ENCODE measurements at regions of chr15 and their contacts with region 1.

Region 1: GRCh38 chr15:42920519-42921227 is at the start of gene TTBK2:
- DNase-seq: peak; percentile 97 to 98 (median 98)
- H3K4me3 ChIP-seq: peak within 1 kb of the TSS; percentile 81 to 98
- H3K4me3 Mint-ChIP-seq: peak within 1 kb of the TSS; percentile 94 to 99 (median 96)
- H3K27ac ChIP-seq: peak within 1 kb of the TSS; percentile 60
- H3K27ac Mint-ChIP-seq: peak within 1 kb of the TSS; percentile 89 to 98 (median 95)
- H3K4me1 ChIP-seq: peaks cover 25% of the 10 kb centered on the region
- H3K4me1 Mint-ChIP-seq: peaks cover 15 to 37% (median 26%) of the 10 kb centered on the region in 4 donors
- H3K27me3 ChIP-seq: no peaks in the 10 kb centered on the region
- H3K27me3 Mint-ChIP-seq: no peaks in the 10 kb centered on the region
- total RNA-seq, gene TTBK2: 27.4 to 28.2 TPM

Region 2: GRCh38 chr15:41116116-41116871 is 1804.4 kb before region 1 on chr15 and contains the start of gene INO80:
- CTCF ChIA-PET with region 1: no interaction called
- POLR2A ChIA-PET with region 1: no interaction called
- intact Hi-C with region 1: loop called (anchors 10 kb)
- DNase-seq: peak; percentile 96 to 97 (median 97)
- H3K4me3 ChIP-seq: peak within 1 kb of the TSS; percentile 95 to 100
- H3K4me3 Mint-ChIP-seq: peak within 1 kb of the TSS; percentile 93 to 99 (median 96)
- H3K27ac ChIP-seq: peak within 1 kb of the TSS; percentile 84
- H3K27ac Mint-ChIP-seq: peak within 1 kb of the TSS; percentile 87 to 100 (median 99)
- H3K4me1 ChIP-seq: peaks cover 31% of the 10 kb centered on the region
- H3K4me1 Mint-ChIP-seq: peaks cover 15 to 36% (median 26%) of the 10 kb centered on the region in 4 donors
- H3K27me3 ChIP-seq: no peaks in the 10 kb centered on the region
- H3K27me3 Mint-ChIP-seq: peaks cover 0 to 2% of the 10 kb centered on the region in 2 donors
- total RNA-seq, gene INO80: 29.7 to 34.4 TPM

Region 3: DNA sequence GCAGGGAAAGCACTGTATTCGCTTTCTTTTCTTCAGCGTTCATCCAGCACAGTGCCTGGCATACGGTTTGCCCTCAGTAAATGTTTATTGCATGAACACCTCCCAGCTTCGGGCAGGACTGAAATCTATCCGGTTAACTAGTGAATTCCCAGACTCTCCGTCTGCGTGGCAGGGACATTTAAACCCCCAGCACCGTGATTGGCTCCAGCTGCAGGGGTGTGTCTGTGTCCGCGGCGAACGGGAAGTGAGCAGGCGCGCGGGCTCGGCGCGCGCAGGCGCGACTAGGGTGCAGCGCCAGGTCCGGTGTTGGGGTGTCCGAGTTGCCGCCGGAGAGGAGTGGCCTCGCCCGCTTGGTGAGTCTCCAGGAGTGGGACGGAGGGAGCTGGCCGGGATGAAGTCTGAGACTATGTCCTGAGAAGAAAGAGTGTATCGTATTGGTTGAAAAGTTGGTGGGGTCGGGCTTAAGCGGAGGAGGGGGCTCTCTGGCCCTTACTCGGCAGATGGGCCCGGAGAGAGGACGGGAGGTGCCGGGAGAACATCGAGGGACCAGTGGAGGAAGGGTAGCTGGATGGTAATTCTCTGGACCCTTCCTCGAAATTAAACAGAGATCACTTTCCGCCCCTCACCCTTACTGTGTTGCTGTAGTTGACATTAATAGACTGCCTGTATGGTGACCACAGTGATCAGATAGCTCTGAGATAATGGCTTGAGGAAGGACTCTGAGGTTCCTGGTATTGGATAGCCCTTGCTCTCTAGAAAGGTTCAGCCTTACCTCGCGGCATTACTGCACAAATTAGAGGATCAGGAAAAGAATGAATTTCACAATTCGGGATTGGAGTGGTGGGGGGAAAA is 425.1 kb before region 1 on chr15 and contains the start of gene SNAP23:
- CTCF ChIA-PET with region 1: no interaction called
- POLR2A ChIA-PET with region 1: interaction called, 6 read pairs
- intact Hi-C with region 1: loop called (anchors 2 kb)
- DNase-seq: peak; percentile 79 to 89 (median 80)
- H3K4me3 ChIP-seq: peak within 1 kb of the TSS; percentile 77 to 88
- H3K4me3 Mint-ChIP-seq: peak within 1 kb of the TSS; percentile 93 to 99 (median 96)
- H3K27ac ChIP-seq: peak within 1 kb of the TSS; percentile 72
- H3K27ac Mint-ChIP-seq: peak within 1 kb of the TSS; percentile 89 to 99 (median 96)
- H3K4me1 ChIP-seq: peaks cover 44% of the 10 kb centered on the region
- H3K4me1 Mint-ChIP-seq: peaks cover 36 to 76% (median 60%) of the 10 kb centered on the region in 4 donors
- H3K27me3 ChIP-seq: no peaks in the 10 kb centered on the region
- H3K27me3 Mint-ChIP-seq: no peaks in the 10 kb centered on the region
- total RNA-seq, gene SNAP23: 70.6 to 72.0 TPM

Region 4: GRCh38 chr15:42581272-42581730 is 339.4 kb before region 1 on chr15:
- CTCF ChIA-PET with region 1: no interaction called
- POLR2A ChIA-PET with region 1: no interaction called
- intact Hi-C with region 1: loop called (anchors 1 kb)
- DNase-seq: peak; percentile 73 to 79 (median 77)
- H3K4me3 ChIP-seq: peak overlapping the region in 1 of 2 donors; percentile 51
- H3K4me3 Mint-ChIP-seq: peak overlapping the region; percentile 89 to 95 (median 91)
- H3K27ac ChIP-seq: peak overlapping the region; percentile 50
- H3K27ac Mint-ChIP-seq: peak overlapping the region; percentile 60 to 96 (median 94)
- H3K4me1 ChIP-seq: peaks cover 20% of the 10 kb centered on the region
- H3K4me1 Mint-ChIP-seq: peaks cover 15 to 41% (median 23%) of the 10 kb centered on the region in 4 donors
- H3K27me3 ChIP-seq: no peaks in the 10 kb centered on the region
- H3K27me3 Mint-ChIP-seq: peaks cover 6 to 11% of the 10 kb centered on the region in 2 donors

Region 5: DNA sequence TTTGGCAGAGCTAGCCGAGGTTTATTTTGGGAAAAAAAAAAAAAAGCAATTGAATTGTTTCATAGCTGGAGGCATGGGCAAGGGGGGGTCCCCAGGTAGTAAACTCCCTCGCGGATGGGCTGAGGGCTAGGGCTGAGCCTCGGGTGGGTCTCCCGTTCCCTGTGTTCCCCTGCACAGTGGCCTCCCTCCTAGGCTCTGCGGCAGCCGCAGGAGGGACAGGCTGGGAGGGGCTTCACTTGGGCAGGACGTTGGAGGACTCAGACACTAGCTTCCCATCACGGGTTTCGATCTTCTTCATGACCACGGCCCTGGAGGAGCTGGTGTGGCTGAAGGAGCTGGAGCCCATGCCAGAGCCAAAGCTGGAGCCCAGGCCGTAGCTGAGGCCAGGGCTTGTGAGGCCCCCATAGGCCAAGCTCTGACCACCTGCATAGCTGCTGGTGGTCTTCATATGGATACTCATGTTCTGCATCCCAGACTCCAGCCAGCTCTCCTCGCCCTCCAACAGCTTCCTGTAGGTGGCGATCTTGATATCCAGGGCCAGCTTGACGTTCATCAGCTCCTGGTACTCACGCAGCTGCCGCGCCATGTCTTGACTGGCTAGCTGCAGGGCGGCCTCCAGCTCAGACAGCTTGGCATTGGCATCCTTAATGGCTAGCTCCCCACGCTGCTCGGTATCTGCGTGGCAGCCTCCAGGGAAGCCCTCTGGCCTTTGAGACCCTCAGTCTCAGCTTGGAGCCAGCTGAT is 119.8 kb before region 1 on chr15:
- CTCF ChIA-PET with region 1: interaction called, 16 read pairs
- POLR2A ChIA-PET with region 1: no interaction called
- intact Hi-C with region 1: loop called (anchors 10 kb)
- DNase-seq: no peak
- H3K4me3 ChIP-seq: no peak overlapping the region
- H3K4me3 Mint-ChIP-seq: no peak overlapping the region
- H3K27ac ChIP-seq: no peak overlapping the region
- H3K27ac Mint-ChIP-seq: no peak overlapping the region
- H3K4me1 ChIP-seq: peaks cover 6% of the 10 kb centered on the region
- H3K4me1 Mint-ChIP-seq: peaks cover 0 to 14% (median 6%) of the 10 kb centered on the region in 4 donors
- H3K27me3 ChIP-seq: no peaks in the 10 kb centered on the region
- H3K27me3 Mint-ChIP-seq: no peaks in the 10 kb centered on the region

Region 6: GRCh38 chr15:42879443-42879842 is 41.2 kb before region 1 on chr15:
- CTCF ChIA-PET with region 1: no interaction called
- POLR2A ChIA-PET with region 1: no interaction called
- intact Hi-C with region 1: no loop called
- DNase-seq: no peak
- H3K4me3 ChIP-seq: no peak overlapping the region
- H3K4me3 Mint-ChIP-seq: no peak overlapping the region
- H3K27ac ChIP-seq: no peak overlapping the region
- H3K27ac Mint-ChIP-seq: no peak overlapping the region
- H3K4me1 ChIP-seq: no peaks in the 10 kb centered on the region
- H3K4me1 Mint-ChIP-seq: peaks cover 0 to 4% (median 0%) of the 10 kb centered on the region in 4 donors
- H3K27me3 ChIP-seq: no peaks in the 10 kb centered on the region
- H3K27me3 Mint-ChIP-seq: no peaks in the 10 kb centered on the region

Measured in CD4-positive, alpha-beta memory T cell (primary cell).